Adrenal gland (tissue), 19 donors: ENCODE measurements at regions of chr9 and their contacts with region 1.

Region 1: GRCh38 chr9:75873712-75874111 is 16.8 kb upstream of the PCSK5 start:
- DNase-seq: no peak
- H3K4me3 ChIP-seq: no peak overlapping the region
- H3K27ac ChIP-seq: no peak overlapping the region
- H3K4me1 ChIP-seq: no peaks in the 10 kb centered on the region
- H3K27me3 ChIP-seq: no peaks in the 10 kb centered on the region
- CTCF ChIP-seq: no peak
- POLR2A ChIP-seq: no peak

Region 2: DNA sequence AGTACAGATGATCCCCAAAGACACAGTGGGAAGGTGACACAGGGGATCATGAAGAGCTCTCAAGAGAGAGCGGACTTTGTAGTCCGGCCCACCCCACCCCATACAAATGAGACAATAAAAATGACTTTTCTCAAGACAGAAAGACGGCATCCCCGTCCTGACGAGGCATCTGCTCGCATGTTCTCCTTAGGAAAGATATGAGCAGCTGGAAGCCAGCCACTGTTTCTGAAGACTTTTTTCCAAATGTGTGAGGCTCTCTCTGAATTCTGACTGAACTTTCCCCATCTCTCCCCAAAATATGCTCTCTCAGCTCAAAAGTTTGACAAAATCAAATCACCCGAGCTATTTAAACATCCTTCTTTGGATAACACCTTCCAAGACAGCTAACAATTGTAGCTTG is 415.3 kb after region 1 on chr9:
- intact Hi-C with region 1: loop called in 1 of 2 experiments (anchors 10 kb)
- DNase-seq: no peak
- H3K4me3 ChIP-seq: no peak overlapping the region
- H3K27ac ChIP-seq: no peak overlapping the region
- H3K4me1 ChIP-seq: no peaks in the 10 kb centered on the region
- H3K27me3 ChIP-seq: no peaks in the 10 kb centered on the region
- CTCF ChIP-seq: no peak
- POLR2A ChIP-seq: no peak